ENCODE measurements at regions of chr2 and their contacts with region 1.

Region 1: GRCh38 chr2:15649556-15650255 is 58.0 kb downstream of the DDX1 start:
- DNase-seq: no peak
- ATAC-seq: no peak
- H3K4me3 ChIP-seq: no peak overlapping the region
- H3K27ac ChIP-seq: no peak overlapping the region
- H3K4me1 ChIP-seq: no peaks in the 10 kb centered on the region
- H3K27me3 ChIP-seq: peaks cover 1% of the 10 kb centered on the region; the same call in 1 of the 2 replicates
- CTCF ChIP-seq: no peak
- POLR2A ChIP-seq: no peak
- RAD21 ChIP-seq: no peak

Region 2: DNA sequence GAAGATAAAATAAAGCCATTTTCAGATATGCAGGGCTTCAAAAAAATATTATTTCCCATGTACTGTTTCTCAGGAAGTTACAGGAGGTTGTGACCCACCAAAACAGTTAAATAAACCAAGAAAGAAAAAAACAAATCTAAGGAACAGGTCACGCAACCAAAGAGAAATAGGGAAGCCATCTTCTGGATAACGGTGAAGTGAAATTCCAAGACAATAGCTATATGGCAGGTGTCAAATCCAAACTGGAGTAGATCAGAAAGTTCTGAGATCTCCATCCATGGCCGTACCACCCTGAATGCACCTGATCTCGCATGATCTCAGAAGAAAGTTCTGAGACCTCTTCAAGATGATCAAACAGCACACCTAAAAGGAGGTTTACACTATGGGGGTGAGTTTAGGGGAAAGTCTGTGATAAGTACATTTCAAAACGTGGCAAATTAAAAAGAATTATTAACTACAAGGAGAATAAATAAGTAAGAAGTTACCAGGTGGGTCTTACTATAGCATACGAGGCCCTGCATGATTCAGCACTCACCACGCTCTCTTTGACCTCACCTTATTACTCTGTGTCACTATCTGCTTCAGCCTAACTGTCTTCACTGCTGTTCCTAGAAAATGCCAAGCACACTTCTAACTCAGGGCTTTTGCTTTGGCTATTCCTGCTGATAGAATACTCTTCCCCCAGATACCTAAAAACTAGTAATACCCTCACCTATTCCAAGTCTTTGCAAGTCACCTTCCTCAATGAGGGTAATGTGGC is 118.4 kb before region 1 on chr2:
- CTCF ChIA-PET with region 1: no interaction called
- POLR2A ChIA-PET with region 1: no interaction called
- dilution Hi-C with region 1: no loop called
- in situ Hi-C with region 1: no loop called
- intact Hi-C with region 1: no loop called
- DNase-seq: no peak
- ATAC-seq: no peak
- H3K4me3 ChIP-seq: no peak overlapping the region
- H3K27ac ChIP-seq: no peak overlapping the region
- H3K4me1 ChIP-seq: no peaks in the 10 kb centered on the region
- H3K27me3 ChIP-seq: no peaks in the 10 kb centered on the region
- CTCF ChIP-seq: no peak
- POLR2A ChIP-seq: no peak
- RAD21 ChIP-seq: no peak

Region 3: GRCh38 chr2:16513626-16514025 is 863.9 kb after region 1 on chr2:
- CTCF ChIA-PET with region 1: no interaction called
- POLR2A ChIA-PET with region 1: no interaction called
- dilution Hi-C with region 1: no loop called
- in situ Hi-C with region 1: loop called (anchors 5 kb)
- intact Hi-C with region 1: no loop called
- DNase-seq: no peak
- ATAC-seq: no peak
- H3K4me3 ChIP-seq: no peak overlapping the region
- H3K27ac ChIP-seq: no peak overlapping the region
- H3K4me1 ChIP-seq: no peaks in the 10 kb centered on the region
- H3K27me3 ChIP-seq: peaks cover 2% of the 10 kb centered on the region; the same call in 1 of the 2 replicates
- CTCF ChIP-seq: no peak
- POLR2A ChIP-seq: no peak
- RAD21 ChIP-seq: no peak